Naive thymus-derived CD4-positive, alpha-beta T cell (primary cell): ENCODE measurements at regions of chr4 and their contacts with region 1.

Region 1: GRCh38 chr4:7960790-7961655 is 21.4 kb upstream of the AFAP1 start:
- DNase-seq: peak in 8 of 9 donors; percentile 20 to 81 (median 31)
- ATAC-seq: peak; percentile 62
- H3K4me3 ChIP-seq: no peak overlapping the region
- H3K4me3 Mint-ChIP-seq: peak overlapping the region in 9 of 10 donors; percentile 38 to 74 (median 58)
- H3K27ac ChIP-seq: no peak overlapping the region
- H3K27ac Mint-ChIP-seq: peak overlapping the region; percentile 38 to 87 (median 72)
- H3K4me1 ChIP-seq: peaks cover 22 to 26% of the 10 kb centered on the region in 2 donors
- H3K4me1 Mint-ChIP-seq: peaks cover 16 to 54% (median 33%) of the 10 kb centered on the region in 7 donors
- H3K27me3 ChIP-seq: no peaks in the 10 kb centered on the region
- H3K27me3 Mint-ChIP-seq: peaks cover 0 to 6% (median 0%) of the 10 kb centered on the region in 5 donors

Region 2: GRCh38 chr4:7646384-7647061 is 314.5 kb before region 1 on chr4:
- CTCF ChIA-PET with region 1: no interaction called
- POLR2A ChIA-PET with region 1: no interaction called
- intact Hi-C with region 1: no loop called
- DNase-seq: no peak
- ATAC-seq: no peak
- H3K4me3 ChIP-seq: no peak overlapping the region
- H3K4me3 Mint-ChIP-seq: peak overlapping the region in 1 of 10 donors; percentile 51
- H3K27ac ChIP-seq: no peak overlapping the region
- H3K27ac Mint-ChIP-seq: no peak overlapping the region
- H3K4me1 ChIP-seq: peaks cover 0 to 38% of the 10 kb centered on the region in 2 donors
- H3K4me1 Mint-ChIP-seq: peaks cover 11 to 44% (median 21%) of the 10 kb centered on the region in 7 donors
- H3K27me3 ChIP-seq: no peaks in the 10 kb centered on the region
- H3K27me3 Mint-ChIP-seq: peaks cover 0 to 54% (median 0%) of the 10 kb centered on the region in 5 donors

Region 3: GRCh38 chr4:7863911-7864681 is 96.9 kb before region 1 on chr4:
- CTCF ChIA-PET with region 1: no interaction called
- POLR2A ChIA-PET with region 1: no interaction called
- intact Hi-C with region 1: loop called in 1 of 2 experiments (anchors 5 kb)
- DNase-seq: peak in 7 of 9 donors; percentile 20 to 68 (median 38)
- ATAC-seq: peak; percentile 60
- H3K4me3 ChIP-seq: no peak overlapping the region
- H3K4me3 Mint-ChIP-seq: peak overlapping the region in 7 of 10 donors; percentile 36 to 75 (median 65)
- H3K27ac ChIP-seq: no peak overlapping the region
- H3K27ac Mint-ChIP-seq: peak overlapping the region; percentile 67 to 96 (median 89)
- H3K4me1 ChIP-seq: peaks cover 0 to 10% of the 10 kb centered on the region in 2 donors
- H3K4me1 Mint-ChIP-seq: peaks cover 8 to 45% (median 33%) of the 10 kb centered on the region in 7 donors
- H3K27me3 ChIP-seq: no peaks in the 10 kb centered on the region
- H3K27me3 Mint-ChIP-seq: peaks cover 0 to 6% (median 0%) of the 10 kb centered on the region in 5 donors

Region 4: DNA sequence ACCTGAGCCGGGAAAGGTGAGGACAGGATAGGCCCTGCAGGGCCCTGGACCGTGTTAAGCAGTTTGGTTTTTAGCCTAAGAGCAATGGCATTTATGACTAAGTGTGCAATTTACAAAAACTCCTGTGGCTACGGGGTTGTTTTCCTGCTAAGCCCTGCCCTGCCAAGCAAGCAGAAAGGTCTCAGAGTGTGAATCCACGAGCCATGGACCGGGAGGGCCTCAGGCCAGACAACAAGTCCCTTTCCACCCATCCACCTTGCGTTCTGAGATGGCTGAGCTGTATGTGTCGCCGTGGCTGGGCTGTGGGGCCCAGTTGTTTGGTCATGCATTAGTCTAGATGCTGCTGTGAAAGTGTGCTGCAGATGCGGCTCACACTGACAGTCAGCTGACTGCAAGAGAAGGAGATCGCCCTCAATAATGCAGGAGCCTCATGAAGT is 12.5 kb after region 1 on chr4:
- CTCF ChIA-PET with region 1: no interaction called
- POLR2A ChIA-PET with region 1: no interaction called
- intact Hi-C with region 1: loop called in 1 of 2 experiments (anchors 1 kb)
- DNase-seq: no peak
- ATAC-seq: no peak
- H3K4me3 ChIP-seq: no peak overlapping the region
- H3K4me3 Mint-ChIP-seq: peak overlapping the region in 1 of 10 donors; percentile 5
- H3K27ac ChIP-seq: no peak overlapping the region
- H3K27ac Mint-ChIP-seq: peak overlapping the region in 6 of 9 donors; percentile 43 to 100 (median 77)
- H3K4me1 ChIP-seq: peaks cover 16 to 37% of the 10 kb centered on the region in 2 donors
- H3K4me1 Mint-ChIP-seq: peaks cover 24 to 51% (median 33%) of the 10 kb centered on the region in 7 donors
- H3K27me3 ChIP-seq: no peaks in the 10 kb centered on the region
- H3K27me3 Mint-ChIP-seq: peaks cover 0 to under 1% (median 0%) of the 10 kb centered on the region in 5 donors

Region 5: GRCh38 chr4:8029689-8030088 is 68.7 kb after region 1 on chr4:
- CTCF ChIA-PET with region 1: no interaction called
- POLR2A ChIA-PET with region 1: no interaction called
- intact Hi-C with region 1: no loop called
- DNase-seq: no peak
- ATAC-seq: no peak
- H3K4me3 ChIP-seq: no peak overlapping the region
- H3K4me3 Mint-ChIP-seq: no peak overlapping the region
- H3K27ac ChIP-seq: no peak overlapping the region
- H3K27ac Mint-ChIP-seq: no peak overlapping the region
- H3K4me1 ChIP-seq: no peaks in the 10 kb centered on the region
- H3K4me1 Mint-ChIP-seq: peaks cover 0 to 2% (median 0%) of the 10 kb centered on the region in 7 donors
- H3K27me3 ChIP-seq: no peaks in the 10 kb centered on the region
- H3K27me3 Mint-ChIP-seq: no peaks in the 10 kb centered on the region

Region 6: DNA sequence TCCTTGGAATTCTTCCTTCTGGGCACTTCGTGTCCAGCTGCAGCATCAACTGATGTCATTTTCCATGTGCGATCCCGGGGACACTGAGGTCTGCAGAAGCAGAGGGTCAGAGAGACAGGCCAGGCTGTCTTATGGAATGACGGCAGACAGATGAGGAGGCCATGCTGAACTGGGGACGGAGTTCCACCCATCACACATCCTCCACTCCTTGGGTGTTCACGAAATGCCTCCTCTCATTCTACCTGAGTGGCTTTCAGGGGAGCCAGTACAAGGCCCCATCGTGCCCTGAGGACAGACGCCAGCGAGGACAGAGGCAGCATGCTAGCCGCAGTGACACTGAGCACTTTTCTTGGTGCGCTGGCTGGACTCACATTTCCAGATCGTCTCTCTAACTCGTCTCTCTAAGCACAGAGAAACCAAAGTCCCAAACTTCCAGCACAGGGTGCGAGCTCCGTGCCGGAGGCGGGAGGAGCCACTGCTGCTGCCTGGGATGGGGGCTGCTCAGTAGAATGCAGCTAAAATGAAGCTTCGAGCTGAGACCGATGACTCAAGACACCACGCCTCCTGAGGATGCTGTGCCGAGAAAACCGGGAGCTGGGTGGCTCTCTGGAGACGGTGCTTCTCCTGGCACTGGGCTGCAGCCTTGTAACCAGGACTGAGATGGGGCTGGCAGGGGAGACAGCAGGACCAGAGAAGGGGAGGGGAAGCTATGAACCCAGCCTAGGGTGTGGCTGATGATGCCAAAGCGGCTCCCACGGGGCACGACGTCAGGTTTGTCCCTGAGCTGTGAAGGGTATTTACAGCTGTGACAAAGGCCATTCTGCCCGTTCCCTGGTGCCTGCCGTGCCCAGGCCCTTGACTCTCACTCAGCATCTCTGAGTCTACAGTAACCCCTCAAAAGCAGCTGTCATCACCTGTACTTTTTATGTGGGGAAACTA is 189.4 kb after region 1 on chr4:
- CTCF ChIA-PET with region 1: no interaction called
- POLR2A ChIA-PET with region 1: no interaction called
- intact Hi-C with region 1: no loop called
- DNase-seq: no peak
- ATAC-seq: no peak
- H3K4me3 ChIP-seq: no peak overlapping the region
- H3K4me3 Mint-ChIP-seq: no peak overlapping the region
- H3K27ac ChIP-seq: no peak overlapping the region
- H3K27ac Mint-ChIP-seq: no peak overlapping the region
- H3K4me1 ChIP-seq: no peaks in the 10 kb centered on the region
- H3K4me1 Mint-ChIP-seq: peaks cover 0 to 2% (median 0%) of the 10 kb centered on the region in 7 donors
- H3K27me3 ChIP-seq: no peaks in the 10 kb centered on the region
- H3K27me3 Mint-ChIP-seq: peaks cover 0 to 6% (median 0%) of the 10 kb centered on the region in 5 donors